Right cardiac atrium (tissue), 5 donors: ENCODE measurements at regions of chr7 and their contacts with region 1.

Region 1: DNA sequence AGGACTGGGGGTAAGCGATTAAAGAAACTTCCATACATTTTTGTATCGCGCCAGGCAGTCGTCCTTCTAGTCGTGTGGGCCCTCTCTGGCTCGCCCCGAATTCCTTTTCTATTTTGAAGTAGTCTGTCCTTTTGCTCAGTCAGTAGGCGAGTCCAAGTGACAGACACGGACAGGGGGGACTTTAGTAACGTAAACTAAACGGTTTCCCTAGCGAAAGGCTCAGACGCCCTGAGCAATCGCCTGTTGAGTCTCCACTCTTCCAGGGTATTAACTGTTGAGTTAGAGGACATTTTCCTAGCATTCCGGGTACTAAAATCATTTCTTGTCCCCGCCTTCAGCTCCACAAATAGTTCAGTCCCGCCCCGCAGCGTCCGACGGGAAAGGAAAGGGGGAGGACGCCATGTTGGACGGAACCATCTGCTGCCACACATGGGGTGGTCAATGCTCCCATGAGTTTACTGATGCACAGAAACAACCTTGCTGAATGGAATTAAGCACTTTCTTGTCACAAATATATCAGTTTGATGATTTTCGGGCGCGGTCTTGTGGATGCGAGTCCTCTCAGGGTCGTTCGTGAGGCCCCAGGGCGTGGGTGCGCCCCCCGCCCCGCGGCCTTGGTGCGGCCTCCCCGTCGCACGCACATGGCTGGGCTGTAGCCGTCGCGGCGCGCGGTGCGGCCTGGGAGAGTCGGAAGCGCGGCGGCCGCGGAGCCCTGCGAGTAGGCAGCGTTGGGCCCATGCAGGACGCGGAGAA is at the start of gene EIF3B:
- DNase-seq: peak; percentile 92 to 96 (median 95)
- ATAC-seq: peak; percentile 95 to 96
- H3K4me3 ChIP-seq: peak within 1 kb of the TSS; percentile 79
- H3K27ac ChIP-seq: peak within 1 kb of the TSS; percentile 98
- H3K4me1 ChIP-seq: peaks cover 6% of the 10 kb centered on the region
- H3K27me3 ChIP-seq: no peaks in the 10 kb centered on the region
- total RNA-seq, gene EIF3B: 64.9 to 81.7 (median 72.8) TPM

Region 2: GRCh38 chr7:1883031-1883761 is 471.2 kb before region 1 on chr7:
- intact Hi-C with region 1: no loop called
- DNase-seq: peak in 2 of 3 donors; percentile 28 to 31
- ATAC-seq: no peak
- H3K4me3 ChIP-seq: no peak overlapping the region
- H3K27ac ChIP-seq: no peak overlapping the region
- H3K4me1 ChIP-seq: peaks cover 8% of the 10 kb centered on the region
- H3K27me3 ChIP-seq: no peaks in the 10 kb centered on the region

Region 3: DNA sequence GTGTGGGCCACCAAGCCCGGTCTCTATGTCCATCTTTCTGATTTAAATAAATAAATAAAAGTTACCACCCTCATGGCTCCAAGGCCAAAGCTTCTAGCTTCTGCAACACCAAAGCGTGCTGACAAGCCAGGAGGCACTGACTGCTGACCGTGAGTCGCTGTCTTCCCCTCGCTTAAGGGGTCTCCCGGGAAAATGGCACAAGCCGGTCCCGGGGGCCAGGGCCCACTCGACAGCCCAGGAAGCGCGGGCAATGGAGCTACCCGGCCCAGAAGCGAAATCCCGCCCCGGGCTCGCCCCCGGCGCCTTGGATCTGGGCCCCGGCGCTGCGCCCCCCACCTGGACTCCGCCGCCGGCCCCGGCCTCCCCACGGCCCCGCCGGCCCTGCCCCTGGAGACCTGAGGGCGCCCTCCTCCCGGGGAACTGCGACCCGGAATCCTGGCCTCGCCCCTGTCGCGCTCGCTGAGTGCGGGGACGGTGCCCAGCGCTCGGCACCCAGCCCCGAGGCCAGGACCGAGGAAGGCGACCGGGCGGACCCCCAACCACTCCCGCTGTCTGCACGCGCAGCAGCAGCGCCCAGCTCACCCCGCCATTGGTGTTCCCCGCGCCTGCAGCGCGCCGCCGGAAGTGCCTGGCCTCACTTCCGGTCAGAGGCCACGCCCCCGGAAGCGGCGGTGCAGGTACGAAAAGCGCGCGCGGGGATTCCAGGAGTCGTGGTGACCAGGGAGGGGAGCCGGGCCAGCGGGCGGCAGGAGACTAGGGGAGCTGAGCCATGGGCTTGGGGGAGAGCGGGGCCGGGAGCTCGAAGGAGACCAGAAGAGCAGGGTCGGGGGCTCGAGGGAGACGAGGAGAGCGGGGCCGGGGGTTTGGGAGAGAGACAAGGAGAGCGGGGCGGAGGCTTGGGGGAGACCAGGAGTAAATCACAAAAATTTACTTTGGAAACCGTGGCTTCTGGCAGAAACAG is 112.5 kb before region 1 on chr7 and contains the starts of genes MRM2 and NUDT1:
- intact Hi-C with region 1: loop called in 2 of 4 experiments (anchors 5 to 10 kb)
- DNase-seq: peak; percentile 83 to 96 (median 93)
- ATAC-seq: peak; percentile 91
- H3K4me3 ChIP-seq: peak within 1 kb of the TSS; percentile 82
- H3K27ac ChIP-seq: peak within 1 kb of the TSS; percentile 55
- H3K4me1 ChIP-seq: peaks cover 4% of the 10 kb centered on the region
- H3K27me3 ChIP-seq: no peaks in the 10 kb centered on the region
- total RNA-seq, gene MRM2: 19.5 to 24.4 (median 21.9) TPM
- total RNA-seq, gene NUDT1: 10.6 to 17.2 (median 14.6) TPM

Region 4: DNA sequence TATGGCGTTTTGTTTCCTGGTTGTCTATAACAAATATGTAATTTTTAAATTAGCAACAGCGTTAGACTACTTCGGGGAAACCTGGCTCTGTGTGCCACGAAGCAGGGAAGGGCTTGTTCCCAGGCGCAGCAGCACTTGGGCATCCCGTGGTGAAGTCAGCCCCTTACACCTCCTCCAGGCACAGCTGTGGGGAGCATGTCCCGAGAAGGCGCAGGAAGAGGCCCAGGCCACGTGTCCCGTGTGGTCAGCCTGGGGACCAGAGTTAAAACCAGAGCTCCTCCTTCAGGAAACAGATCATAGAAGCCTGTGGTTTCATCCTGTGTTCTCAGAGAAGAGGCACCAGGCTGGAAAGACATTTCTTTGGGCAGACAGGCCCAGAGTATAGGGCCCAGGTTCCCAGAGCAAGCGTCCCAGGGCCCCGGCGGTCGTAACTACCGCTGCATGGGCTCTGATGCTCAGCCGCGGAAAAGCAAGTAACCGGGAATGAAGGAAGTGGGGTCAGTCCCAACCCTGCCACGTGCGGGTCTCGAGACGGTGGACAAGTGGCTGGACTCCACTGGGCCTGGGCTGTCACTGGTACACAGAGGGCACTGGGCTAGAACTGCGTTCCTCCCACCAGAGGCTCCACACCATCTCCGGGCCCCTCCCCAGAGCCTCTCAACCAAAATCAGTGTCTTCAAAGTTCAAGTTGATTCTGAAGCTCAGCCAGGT is 105.2 kb before region 1 on chr7:
- intact Hi-C with region 1: loop called in 2 of 4 experiments (anchors 5 to 10 kb)
- DNase-seq: peak; percentile 63 to 85 (median 83)
- ATAC-seq: peak; percentile 65 to 71
- H3K4me3 ChIP-seq: no peak overlapping the region
- H3K27ac ChIP-seq: no peak overlapping the region
- H3K4me1 ChIP-seq: no peaks in the 10 kb centered on the region
- H3K27me3 ChIP-seq: no peaks in the 10 kb centered on the region